HEK293T (cell line): ENCODE measurements at regions of chr1 and their contacts with region 1.

Region 1: GRCh38 chr1:203038891-203039608 is 12.8 kb downstream of the PPFIA4 start:
- DNase-seq: peak; percentile 84

Region 2: DNA sequence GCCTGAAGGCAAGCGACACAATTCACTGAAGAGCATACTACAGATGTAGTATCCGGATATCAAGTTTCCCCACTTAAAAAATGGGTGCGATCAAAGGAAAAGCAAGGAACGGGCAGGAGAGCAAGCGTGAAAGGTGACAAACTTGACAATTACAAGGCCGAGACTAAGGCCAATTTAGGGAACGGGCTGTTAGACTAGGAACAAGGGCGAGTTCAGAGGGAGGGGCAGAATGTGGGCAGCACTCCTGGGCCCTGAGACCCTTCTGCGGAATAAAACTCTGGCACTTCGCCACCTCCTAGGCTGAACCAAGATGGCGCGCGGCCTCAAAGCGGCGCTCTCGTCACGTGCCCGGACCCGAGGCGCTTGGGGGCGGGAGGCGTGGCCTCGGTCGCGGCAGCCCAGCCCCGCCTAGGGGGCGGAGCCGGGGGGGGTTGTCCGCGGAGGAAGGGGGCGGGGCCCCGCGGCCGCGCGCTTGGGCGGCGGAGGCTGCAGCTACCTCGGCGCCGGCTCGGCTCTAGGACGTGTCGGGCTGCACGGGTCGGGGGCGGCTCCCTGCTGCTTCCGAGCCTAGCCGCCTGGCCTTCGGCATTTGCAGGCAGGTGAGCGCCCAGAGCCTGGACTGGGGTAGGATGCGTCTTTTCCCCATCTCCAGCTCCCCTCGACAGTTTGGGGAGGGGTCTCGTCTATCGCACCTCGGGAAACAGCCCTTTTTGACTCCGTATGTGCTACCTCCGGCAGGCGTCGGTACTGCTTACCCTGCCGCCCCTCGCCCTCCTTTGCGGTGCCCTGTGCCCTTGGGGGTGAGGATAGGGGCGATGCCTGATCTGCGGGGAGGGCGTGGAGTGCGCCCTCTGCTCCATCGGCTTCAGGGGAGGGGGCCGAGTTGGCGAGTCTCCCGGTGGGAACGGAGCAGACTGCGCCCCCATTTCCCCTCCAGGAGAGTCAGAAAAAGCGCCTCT is 12.7 kb before region 1 on chr1 and contains the start of gene PPFIA4:
- CTCF ChIA-PET with region 1: interaction called, 25 read pairs
- POLR2A ChIA-PET with region 1: interaction called, 5 read pairs
- DNase-seq: peak; percentile 100

Region 3: GRCh38 chr1:203117611-203118575 is 78.8 kb after region 1 on chr1:
- CTCF ChIA-PET with region 1: interaction called, 15 read pairs
- POLR2A ChIA-PET with region 1: no interaction called
- DNase-seq: peak; percentile 96

Region 4: DNA sequence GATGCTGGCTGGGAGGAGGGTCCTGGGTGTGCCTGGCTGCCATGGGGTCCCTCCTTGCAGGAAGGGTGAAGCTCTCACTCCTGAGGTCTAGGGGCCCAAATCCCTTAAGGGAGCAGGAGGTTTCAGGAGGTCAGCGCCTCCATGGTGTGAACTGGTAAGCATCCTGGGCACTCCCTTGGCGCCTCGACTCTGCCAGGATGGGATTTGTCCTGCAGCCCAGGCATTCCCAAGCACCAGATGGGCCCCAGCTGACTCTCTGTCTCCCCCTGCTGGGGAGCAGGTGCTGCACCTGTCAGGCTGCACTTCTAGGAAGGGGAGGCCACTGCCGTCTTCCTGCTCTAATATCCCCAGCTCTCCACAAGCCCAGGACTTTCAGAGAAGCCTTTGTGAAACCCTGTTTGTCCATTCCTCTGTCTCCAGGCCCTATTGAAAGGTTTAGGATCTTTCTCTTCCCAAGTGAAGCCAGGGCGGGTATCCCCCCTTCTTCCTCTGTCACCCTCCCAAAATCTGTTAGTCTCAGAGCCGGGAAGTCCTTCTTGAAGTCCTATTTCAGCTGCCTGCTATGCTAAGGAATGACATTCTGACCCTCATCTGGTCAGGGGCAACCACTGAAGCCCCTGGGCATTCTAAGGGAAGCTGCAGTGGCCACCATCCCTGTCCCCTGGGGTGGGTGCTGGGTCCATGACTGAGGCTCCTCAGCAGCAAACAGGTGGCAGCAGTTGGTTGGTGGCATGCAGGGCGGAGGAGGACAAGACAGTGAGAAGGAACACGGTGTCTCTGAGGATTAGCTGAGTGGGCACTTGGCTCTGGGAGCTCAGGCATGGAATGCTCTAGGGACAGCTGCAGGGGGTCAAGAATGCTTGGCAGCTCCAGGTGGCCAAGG is 133.3 kb after region 1 on chr1:
- CTCF ChIA-PET with region 1: interaction called, 17 read pairs
- POLR2A ChIA-PET with region 1: no interaction called
- DNase-seq: peak; percentile 91

Region 5: DNA sequence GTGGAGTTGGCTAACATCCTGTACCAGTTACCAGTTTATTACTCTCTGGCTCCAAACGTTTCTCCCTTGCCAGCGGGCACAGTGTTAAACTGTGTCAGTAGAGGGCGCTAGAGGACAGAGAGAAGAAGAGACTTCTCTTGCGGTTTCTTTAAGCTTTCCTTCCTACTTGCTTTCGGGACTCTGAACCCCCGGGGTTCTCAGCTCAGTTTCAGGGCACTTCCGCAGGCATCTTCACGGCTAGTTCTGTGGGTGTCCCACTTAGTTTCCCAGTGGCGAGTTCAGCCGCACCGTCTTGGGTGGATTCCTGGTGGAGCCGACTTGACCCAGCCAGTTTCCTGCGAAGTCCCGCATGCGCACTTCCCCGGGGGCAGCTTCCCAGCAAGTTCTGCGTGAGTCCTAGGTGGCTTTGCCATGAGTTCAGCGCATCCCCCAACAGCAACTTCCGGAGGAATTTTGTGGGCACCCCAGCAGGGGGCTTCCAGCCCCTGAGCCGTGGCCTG is 228.3 kb after region 1 on chr1:
- CTCF ChIA-PET with region 1: interaction called, 58 read pairs
- POLR2A ChIA-PET with region 1: no interaction called
- DNase-seq: peak; percentile 81